GM10248 (cell line): ENCODE measurements at regions of chr16 and their contacts with region 1.

Region 1: GRCh38 chr16:2926650-2927646 is 15.2 kb downstream of the FLYWCH1 start:
- DNase-seq: peak; percentile 80
- CTCF ChIP-seq: peak; percentile 98

Region 2: DNA sequence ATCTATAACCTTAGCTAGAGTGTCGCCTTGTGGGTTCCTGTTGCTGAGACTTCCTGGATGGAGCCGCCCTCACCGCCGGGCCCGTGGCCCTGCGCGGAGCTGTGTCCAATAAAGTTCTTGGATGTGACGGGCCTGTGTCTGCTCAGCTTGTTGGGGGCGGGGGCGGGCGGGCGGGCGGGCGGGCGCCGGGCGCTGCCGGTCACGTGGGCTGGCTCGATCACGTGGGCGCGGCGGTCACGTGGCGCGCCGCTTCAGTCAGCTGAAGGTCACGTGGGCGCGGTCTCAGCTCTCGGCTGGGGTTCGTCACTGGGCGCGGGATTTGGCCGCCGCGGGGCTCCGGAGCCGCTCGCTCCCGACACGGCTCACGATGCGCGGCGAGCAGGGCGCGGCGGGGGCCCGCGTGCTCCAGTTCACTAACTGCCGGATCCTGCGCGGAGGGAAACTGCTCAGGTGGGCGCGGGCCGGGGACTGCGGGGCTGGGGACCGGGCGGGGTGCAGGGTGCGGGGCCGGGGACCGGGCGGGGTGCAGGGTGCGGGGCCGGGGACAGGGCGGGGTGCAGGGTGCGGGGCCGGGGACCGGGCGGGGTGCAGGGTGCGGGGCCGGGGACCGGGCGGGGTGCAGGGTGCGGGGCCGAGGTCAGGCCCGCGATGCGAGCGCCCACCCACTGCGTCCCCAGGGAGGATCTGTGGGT is 406.7 kb before region 1 on chr16 and contains the start of gene AMDHD2:
- CTCF ChIA-PET with region 1: no interaction called
- POLR2A ChIA-PET with region 1: no interaction called
- DNase-seq: peak; percentile 96
- CTCF ChIP-seq: no peak

Region 3: GRCh38 chr16:2838928-2839327 is 88.0 kb before region 1 on chr16:
- CTCF ChIA-PET with region 1: interaction called, 11 read pairs
- POLR2A ChIA-PET with region 1: no interaction called
- DNase-seq: peak; percentile 77
- CTCF ChIP-seq: peak; percentile 74

Region 4: GRCh38 chr16:2883027-2883851 is 43.7 kb before region 1 on chr16 and contains the start of gene FLYWCH2:
- CTCF ChIA-PET with region 1: interaction called, 10 read pairs
- POLR2A ChIA-PET with region 1: no interaction called
- DNase-seq: peak; percentile 97
- CTCF ChIP-seq: no peak

Region 5: GRCh38 chr16:2942045-2942444 is 15.1 kb after region 1 on chr16:
- CTCF ChIA-PET with region 1: interaction called, 23 read pairs
- POLR2A ChIA-PET with region 1: no interaction called
- DNase-seq: no peak
- CTCF ChIP-seq: no peak

Region 6: DNA sequence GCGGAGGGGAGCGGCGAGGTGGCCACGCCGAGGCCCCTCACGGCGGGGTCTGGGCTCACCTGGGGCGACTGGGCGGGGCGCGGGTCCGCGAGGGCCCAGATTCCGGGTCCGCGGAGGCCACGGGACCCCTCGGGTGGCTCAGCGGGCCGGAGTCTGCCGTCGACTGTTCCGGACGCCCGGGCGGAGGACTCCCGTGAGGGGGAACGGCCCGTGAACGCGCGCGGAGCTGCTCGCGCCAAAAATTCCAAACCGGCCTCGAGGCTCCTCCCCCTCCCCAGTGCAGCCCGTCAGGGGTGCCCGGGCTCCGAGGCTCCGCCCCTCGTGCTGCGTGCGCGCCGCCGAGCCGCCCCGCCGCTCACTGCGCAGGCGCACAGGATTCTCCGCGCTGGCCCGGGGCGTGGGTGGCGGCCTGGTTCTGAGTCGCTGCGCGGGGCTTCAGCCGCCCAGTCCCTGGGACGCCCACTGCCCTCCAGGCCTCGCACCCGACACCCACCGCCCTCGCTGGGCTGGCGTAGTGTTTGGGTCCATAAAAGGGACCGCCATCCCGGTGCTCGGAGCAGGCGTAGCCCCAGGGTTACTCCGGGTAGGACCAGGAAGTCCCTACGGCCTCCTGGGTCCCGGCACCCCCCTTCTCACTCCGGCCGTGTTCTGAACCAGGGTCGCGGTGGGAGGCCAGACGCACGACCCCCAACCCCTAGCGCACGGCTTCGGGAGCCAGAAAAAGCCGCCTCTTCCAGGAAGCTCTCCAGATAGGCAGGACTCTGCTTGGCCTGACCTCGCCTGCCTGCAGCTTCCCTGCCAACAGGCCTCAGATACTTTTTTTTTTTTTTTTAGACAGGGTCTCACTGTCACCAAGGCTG is 53.5 kb after region 1 on chr16 and contains the start of gene PKMYT1:
- CTCF ChIA-PET with region 1: interaction called, 12 read pairs
- POLR2A ChIA-PET with region 1: no interaction called
- DNase-seq: peak; percentile 100
- CTCF ChIP-seq: no peak